Heart left ventricle (tissue), 16 donors: ENCODE measurements at regions of chr15 and their contacts with region 1.

Region 1: GRCh38 chr15:97745465-97746071 is 214.9 kb upstream of the ARRDC4 start:
- DNase-seq: peak in 2 of 5 donors; percentile 8 to 36
- ATAC-seq: no peak
- H3K4me3 ChIP-seq: no peak overlapping the region
- H3K27ac ChIP-seq: no peak overlapping the region
- H3K4me1 ChIP-seq: no peaks in the 10 kb centered on the region
- H3K27me3 ChIP-seq: no peaks in the 10 kb centered on the region
- CTCF ChIP-seq: peak; percentile 50 to 75 (median 60)
- POLR2A ChIP-seq: no peak

Region 2: DNA sequence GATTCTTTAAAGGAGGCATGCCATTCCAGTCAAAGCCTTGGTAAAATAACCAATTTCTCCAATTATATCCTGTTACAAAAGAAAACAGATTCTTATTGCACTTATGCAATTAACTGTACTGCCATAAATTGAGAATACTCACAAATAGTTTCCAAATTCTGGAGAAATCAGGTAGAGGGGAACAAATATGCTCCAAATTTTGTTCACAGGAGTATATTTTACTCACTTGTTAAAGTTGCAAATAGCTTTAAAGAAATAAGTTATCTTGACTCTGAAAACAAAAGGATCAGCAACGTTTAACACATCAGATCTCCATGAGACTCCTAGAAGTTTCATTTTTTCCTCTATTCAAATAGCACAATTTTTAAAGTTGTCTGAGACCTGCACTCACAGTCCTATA is 497.2 kb before region 1 on chr15:
- intact Hi-C with region 1: loop called in 1 of 10 experiments (anchors 10 kb)
- DNase-seq: no peak
- ATAC-seq: no peak
- H3K4me3 ChIP-seq: no peak overlapping the region
- H3K27ac ChIP-seq: no peak overlapping the region
- H3K4me1 ChIP-seq: no peaks in the 10 kb centered on the region
- H3K27me3 ChIP-seq: no peaks in the 10 kb centered on the region
- CTCF ChIP-seq: no peak
- POLR2A ChIP-seq: no peak

Region 3: DNA sequence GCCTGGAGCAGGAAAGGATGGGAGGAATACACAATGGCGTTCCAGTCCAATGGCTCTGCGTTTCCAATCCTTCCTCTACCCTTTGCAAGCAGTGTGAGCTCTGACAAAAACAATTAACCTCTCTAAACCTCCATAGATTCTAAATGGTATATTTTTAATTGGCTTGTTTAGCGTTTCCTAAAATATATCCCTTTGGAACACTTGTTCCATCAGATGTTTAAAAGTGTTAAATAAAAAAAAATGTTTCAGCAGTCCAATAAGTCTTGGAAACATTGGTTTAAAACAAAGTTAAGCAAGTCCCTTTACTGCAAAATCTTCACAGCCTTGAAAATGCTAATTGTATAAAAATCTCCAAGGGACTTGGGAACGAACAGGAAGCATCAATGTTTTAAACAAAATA is 217.3 kb before region 1 on chr15:
- intact Hi-C with region 1: no loop called
- DNase-seq: no peak
- ATAC-seq: no peak
- H3K4me3 ChIP-seq: no peak overlapping the region
- H3K27ac ChIP-seq: no peak overlapping the region
- H3K4me1 ChIP-seq: peaks cover 0 to 4% (median 0%) of the 10 kb centered on the region in 12 donors
- H3K27me3 ChIP-seq: no peaks in the 10 kb centered on the region
- CTCF ChIP-seq: no peak
- POLR2A ChIP-seq: no peak

Region 4: DNA sequence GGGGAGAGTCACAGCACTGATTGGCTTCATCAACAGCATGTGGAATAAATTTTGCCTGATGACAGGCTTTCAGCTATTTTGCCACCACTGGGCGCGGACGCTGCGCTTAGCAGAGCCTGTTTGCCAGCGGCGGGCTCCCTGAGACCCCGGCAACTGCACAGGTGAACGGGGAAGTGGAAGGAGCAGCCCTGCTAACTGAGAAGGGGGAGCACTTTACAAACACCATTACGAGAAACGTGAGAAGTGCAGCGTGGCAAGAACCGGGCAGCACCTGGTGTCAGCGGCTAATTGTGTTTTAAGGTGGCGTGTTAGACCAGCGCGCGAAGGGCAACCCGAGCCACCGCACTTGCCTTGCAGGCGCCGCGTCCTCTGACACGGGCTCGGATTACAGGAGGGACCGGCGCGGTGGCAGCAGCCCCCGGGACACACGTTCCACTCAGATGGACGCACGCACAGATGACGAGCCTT is 92.8 kb before region 1 on chr15:
- intact Hi-C with region 1: no loop called
- DNase-seq: peak in 3 of 5 donors; percentile 9 to 58 (median 30)
- ATAC-seq: peak in 3 of 4 donors; percentile 56 to 73 (median 69)
- H3K4me3 ChIP-seq: peak overlapping the region in 8 of 12 donors; percentile 13 to 39 (median 34)
- H3K27ac ChIP-seq: peak overlapping the region in 1 of 12 donors; percentile 29
- H3K4me1 ChIP-seq: peaks cover 0 to 9% (median 0%) of the 10 kb centered on the region in 12 donors
- H3K27me3 ChIP-seq: peaks cover 0 to 19% (median 3%) of the 10 kb centered on the region in 9 donors
- CTCF ChIP-seq: no peak
- POLR2A ChIP-seq: no peak

Region 5: GRCh38 chr15:97678656-97679055 is 66.9 kb before region 1 on chr15:
- intact Hi-C with region 1: no loop called
- DNase-seq: no peak
- ATAC-seq: no peak
- H3K4me3 ChIP-seq: no peak overlapping the region
- H3K27ac ChIP-seq: no peak overlapping the region
- H3K4me1 ChIP-seq: no peaks in the 10 kb centered on the region
- H3K27me3 ChIP-seq: no peaks in the 10 kb centered on the region
- CTCF ChIP-seq: no peak
- POLR2A ChIP-seq: no peak